ENCODE measurements at regions of chr17 and their contacts with region 1.

Region 1: GRCh38 chr17:64984851-64985521 is 65.7 kb upstream of the LRRC37A3 start:
- DNase-seq: peak; percentile 44
- H3K4me3 Mint-ChIP-seq: peak overlapping the region; percentile 82
- H3K27ac Mint-ChIP-seq: peak overlapping the region; percentile 99
- H3K4me1 Mint-ChIP-seq: peaks cover 47% of the 10 kb centered on the region
- H3K27me3 Mint-ChIP-seq: no peaks in the 10 kb centered on the region

Region 2: GRCh38 chr17:64968652-64969501 is 16.1 kb before region 1 on chr17:
- intact Hi-C with region 1: loop called (anchors 1 kb)
- DNase-seq: no peak
- H3K4me3 Mint-ChIP-seq: peak overlapping the region; percentile 31
- H3K27ac Mint-ChIP-seq: peak overlapping the region; percentile 70
- H3K4me1 Mint-ChIP-seq: peaks cover 58% of the 10 kb centered on the region
- H3K27me3 Mint-ChIP-seq: peaks cover 1% of the 10 kb centered on the region

Region 3: DNA sequence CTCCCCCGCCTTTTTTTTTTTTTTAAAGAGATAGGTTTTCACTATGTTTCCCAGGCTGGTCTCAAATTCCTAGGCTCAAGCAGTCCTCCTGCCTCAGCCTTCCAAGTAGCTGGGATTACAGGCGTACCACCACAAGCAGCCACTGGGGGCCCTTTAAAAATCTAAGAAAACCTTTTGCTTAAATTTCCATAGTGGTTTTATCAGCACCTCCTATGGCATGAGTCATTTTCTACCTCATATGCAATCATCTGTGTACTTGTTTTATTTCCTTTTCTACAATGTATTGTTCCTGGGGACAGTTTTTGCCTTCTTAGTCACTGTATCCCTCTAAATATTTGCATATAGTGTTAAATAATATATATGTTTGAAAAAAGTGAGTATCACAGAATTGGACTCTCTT is 42.3 kb after region 1 on chr17:
- intact Hi-C with region 1: loop called (anchors 1 kb)
- DNase-seq: peak; percentile 31
- H3K4me3 Mint-ChIP-seq: peak overlapping the region; percentile 60
- H3K27ac Mint-ChIP-seq: peak overlapping the region; percentile 91
- H3K4me1 Mint-ChIP-seq: peaks cover 77% of the 10 kb centered on the region
- H3K27me3 Mint-ChIP-seq: no peaks in the 10 kb centered on the region

Region 4: DNA sequence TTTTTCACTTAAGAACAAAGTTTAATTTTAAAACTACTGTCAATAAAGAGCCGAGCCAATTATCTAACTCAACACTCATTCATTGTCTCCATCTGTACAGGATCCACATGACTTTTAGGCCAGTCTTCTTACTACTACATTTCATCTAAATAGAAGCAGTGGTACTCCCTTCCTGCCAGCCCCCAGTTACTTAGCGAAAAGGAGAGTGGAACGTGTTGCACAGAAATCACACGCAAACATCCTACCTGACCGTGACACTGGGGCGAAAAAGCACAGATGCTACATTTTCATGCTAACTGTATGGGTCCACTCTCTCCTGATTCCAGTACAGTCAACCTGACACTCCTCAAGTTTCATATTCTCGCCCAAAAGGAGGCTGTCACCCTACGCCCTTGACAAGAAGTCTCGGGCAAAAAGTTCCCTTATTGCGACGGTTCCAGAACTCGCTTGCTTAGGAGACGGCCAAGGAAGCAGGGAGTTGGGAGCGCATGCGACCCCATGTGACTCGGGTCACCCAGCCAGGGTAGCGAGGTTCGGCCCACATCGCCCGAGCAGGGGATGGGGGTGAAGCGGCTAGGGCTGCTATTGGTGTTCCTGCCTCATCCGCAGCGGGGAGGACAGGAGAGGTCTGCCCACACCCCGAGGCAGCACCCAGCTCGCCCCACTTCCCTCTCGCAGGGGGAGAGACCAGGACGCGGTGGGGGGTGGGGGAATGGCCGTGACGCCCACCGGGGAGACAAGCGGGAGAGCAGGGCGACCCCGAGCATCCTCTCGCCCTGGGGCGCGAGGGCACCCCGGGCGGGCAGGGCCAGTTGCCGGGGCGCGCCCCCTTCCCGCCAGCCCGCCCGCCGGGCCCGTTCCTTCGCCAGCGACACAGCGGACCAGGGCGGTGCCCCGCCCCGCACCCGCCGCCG is 70.6 kb after region 1 on chr17:
- intact Hi-C with region 1: loop called (anchors 1 kb)
- DNase-seq: peak; percentile 53
- H3K4me3 Mint-ChIP-seq: peak overlapping the region; percentile 94
- H3K27ac Mint-ChIP-seq: peak overlapping the region; percentile 93
- H3K4me1 Mint-ChIP-seq: peaks cover 32% of the 10 kb centered on the region
- H3K27me3 Mint-ChIP-seq: peaks cover 5% of the 10 kb centered on the region

Region 5: DNA sequence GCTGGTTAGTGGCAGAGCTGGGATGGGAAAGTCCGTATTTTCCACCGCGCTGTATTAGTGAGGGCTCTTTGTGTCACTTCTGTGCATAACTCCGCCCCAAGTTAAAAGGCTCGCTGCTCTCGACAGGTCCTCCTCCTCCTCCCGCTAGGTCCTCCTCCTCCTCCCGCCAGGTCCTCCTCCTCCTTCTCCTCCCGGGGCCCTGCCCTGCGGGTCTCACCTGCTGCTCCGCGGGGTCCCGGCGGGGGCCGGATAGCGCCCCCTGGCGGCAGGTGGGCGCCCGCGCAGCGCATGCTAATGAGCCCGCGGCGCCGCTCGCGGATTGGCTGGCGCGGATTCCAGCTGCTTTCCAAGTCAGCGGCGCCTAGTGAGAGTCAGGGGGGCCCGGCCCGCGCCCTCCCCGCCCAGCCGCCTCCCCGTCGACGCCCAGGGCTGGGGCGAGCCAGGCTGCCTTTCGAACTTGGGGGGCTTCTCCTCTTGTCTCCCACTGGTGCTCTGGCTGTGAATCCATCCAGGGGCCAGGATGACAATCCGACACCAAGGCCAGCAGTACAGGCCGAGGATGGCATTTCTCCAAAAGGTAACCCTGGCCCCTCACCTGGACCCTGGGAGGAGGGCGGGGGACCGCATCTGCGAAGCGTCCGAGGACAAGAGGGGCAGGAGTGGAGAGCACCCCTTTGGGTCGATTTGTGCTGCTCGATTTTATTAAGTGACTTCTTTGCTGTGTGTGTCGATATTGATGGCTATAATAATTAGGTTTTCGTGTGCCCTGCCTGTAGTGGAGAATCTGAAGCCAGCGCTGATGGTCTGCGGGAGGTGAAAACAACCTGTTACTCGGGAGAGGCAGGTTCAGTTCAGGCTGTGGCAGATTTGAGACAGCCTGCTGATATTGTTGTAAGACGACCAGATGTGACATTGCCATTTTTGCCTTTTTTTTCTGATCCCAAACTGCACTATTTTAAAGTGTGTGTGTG is 152.3 kb after region 1 on chr17 and contains the start of gene RGS9:
- intact Hi-C with region 1: loop called (anchors 1 kb)
- DNase-seq: peak; percentile 85
- H3K4me3 Mint-ChIP-seq: peak within 1 kb of the TSS; percentile 86
- H3K27ac Mint-ChIP-seq: peak within 1 kb of the TSS; percentile 49
- H3K4me1 Mint-ChIP-seq: peaks cover 33% of the 10 kb centered on the region
- H3K27me3 Mint-ChIP-seq: peaks cover 24% of the 10 kb centered on the region
- total RNA-seq, gene RGS9: 1.1 and 1.8 TPM in 2 replicates

Region 6: DNA sequence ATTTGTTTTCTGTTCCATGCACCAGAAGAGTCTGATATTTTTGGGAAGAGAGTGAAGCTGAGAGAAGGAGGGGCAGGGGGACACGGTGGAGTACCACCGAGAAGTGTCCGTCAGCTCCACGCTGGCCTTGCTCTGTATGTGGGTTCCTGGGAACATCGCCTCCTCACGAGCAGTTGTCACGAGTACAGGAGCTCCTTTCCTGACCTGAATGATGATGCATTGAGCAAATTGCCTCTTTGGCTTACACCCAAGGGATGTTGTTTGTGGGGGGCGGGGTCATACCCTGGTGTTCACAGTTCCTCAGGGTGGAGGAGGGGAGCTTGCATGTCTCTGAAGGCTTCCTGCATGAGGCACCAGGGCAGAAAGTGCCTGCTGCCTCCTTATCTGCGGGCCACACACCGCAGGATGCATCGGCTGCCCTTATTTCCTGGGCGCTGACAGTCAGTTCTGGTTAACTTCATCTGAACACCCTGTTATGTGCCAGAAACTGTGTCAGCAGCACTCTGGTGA is 188.4 kb after region 1 on chr17:
- intact Hi-C with region 1: no loop called
- DNase-seq: peak; percentile 71
- H3K4me3 Mint-ChIP-seq: peak overlapping the region; percentile 29
- H3K27ac Mint-ChIP-seq: no peak overlapping the region
- H3K4me1 Mint-ChIP-seq: peaks cover 30% of the 10 kb centered on the region
- H3K27me3 Mint-ChIP-seq: peaks cover 2% of the 10 kb centered on the region